A549 (cell line): ENCODE measurements at regions of chr7 and their contacts with region 1.

Region 1: DNA sequence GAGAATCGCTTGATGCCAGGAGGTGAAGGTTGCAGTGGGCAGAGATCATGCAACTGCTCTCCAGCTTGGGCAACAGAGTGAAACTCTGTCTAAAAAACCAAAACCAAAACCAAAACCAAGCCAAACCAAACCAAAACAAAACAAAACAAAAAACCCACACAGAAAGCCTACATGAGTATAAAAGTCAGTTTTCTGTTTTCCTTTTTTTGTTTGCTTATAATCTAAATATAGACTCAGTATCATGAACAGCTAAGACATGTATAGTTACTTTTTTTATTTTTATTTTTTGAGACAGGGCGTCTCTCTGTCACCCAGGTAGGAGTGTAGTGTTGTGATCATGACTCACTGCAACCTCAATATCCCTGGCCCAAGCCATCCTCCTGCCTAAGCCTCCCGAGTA is 16.8 kb upstream of the MTPN start:
- DNase-seq: no peak
- ATAC-seq: no peak
- H3K4me3 ChIP-seq: no peak overlapping the region
- H3K27ac ChIP-seq: no peak overlapping the region
- H3K4me1 ChIP-seq: no peaks in the 10 kb centered on the region
- CTCF ChIP-seq: no peak
- EP300 ChIP-seq: no peak
- POLR2A ChIP-seq: no peak
- RAD21 ChIP-seq: no peak

Region 2: DNA sequence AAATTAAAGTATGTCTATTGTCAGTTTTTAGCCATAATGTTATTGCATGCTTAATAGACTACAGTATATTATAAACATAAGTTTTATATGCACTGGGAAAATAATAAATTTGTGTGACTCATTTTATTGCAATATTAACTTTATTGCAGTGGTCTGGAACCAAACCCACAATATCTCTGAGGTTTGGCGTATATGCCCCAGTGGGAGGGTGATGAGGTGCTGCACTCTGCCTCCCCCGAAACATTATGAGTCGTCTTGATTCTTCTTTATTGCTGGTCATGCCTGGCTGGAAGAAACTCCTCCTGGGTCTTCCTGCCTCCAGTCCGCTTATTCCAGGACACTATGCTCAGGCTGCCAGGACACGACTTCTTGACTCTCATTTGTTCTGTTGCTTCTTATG is 105.2 kb before region 1 on chr7:
- CTCF ChIA-PET with region 1: no interaction called
- POLR2A ChIA-PET with region 1: no interaction called
- DNase-seq: no peak
- ATAC-seq: no peak
- H3K4me3 ChIP-seq: no peak overlapping the region
- H3K27ac ChIP-seq: no peak overlapping the region
- H3K4me1 ChIP-seq: no peaks in the 10 kb centered on the region
- CTCF ChIP-seq: no peak
- EP300 ChIP-seq: no peak
- POLR2A ChIP-seq: no peak
- RAD21 ChIP-seq: no peak

Region 3: GRCh38 chr7:136009488-136010079 is 15.6 kb after region 1 on chr7:
- CTCF ChIA-PET with region 1: interaction called, 20 read pairs
- POLR2A ChIA-PET with region 1: no interaction called
- DNase-seq: peak; percentile 15 to 49
- ATAC-seq: peak in 1 of 2 experiments; percentile 70; a peak in 4 of 6 replicates
- H3K4me3 ChIP-seq: no peak overlapping the region
- H3K27ac ChIP-seq: no peak overlapping the region
- H3K4me1 ChIP-seq: no peaks in the 10 kb centered on the region
- CTCF ChIP-seq: peak; percentile 84
- EP300 ChIP-seq: no peak
- POLR2A ChIP-seq: no peak
- RAD21 ChIP-seq: peak; percentile 86 to 87